Activated B cell treated with CpG ODN at 0.5 μM for 24 hours (primary cell): ENCODE measurements at regions of chr4 and their contacts with region 1.

Region 1: DNA sequence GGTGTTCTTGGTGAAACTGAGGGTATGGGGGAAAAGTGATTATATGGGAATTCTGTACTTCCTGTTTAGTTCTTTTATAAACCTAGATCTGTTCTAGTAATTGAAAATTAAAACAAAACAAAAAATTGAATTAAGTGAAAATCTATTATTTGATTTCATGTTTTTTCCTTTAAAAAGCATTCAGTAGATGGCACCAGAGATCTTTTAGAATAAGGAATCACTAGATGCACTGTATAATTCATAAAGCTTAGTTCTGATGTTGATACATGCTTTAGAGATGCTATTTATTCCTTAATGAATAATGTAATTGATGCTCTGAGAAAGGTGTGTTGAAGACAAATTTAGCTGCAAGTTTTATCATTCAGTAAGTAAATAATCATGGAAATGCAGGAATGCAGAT is 87.3 kb downstream of the LCORL start:
- DNase-seq: no peak
- ATAC-seq: no peak
- H3K4me3 Mint-ChIP-seq: no peak overlapping the region
- H3K27ac Mint-ChIP-seq: no peak overlapping the region
- H3K4me1 Mint-ChIP-seq: no peaks in the 10 kb centered on the region
- H3K27me3 Mint-ChIP-seq: no peaks in the 10 kb centered on the region
- CTCF ChIP-seq: no peak

Region 2: GRCh38 chr4:18075823-18076433 is 141.6 kb after region 1 on chr4:
- CTCF ChIA-PET with region 1: no interaction called
- POLR2A ChIA-PET with region 1: interaction called, 11 read pairs
- intact Hi-C with region 1: no loop called
- DNase-seq: no peak
- ATAC-seq: peak; percentile 56
- H3K4me3 Mint-ChIP-seq: no peak overlapping the region
- H3K27ac Mint-ChIP-seq: no peak overlapping the region
- H3K4me1 Mint-ChIP-seq: peaks cover 3% of the 10 kb centered on the region
- H3K27me3 Mint-ChIP-seq: peaks cover 26% of the 10 kb centered on the region
- CTCF ChIP-seq: no peak

Region 3: DNA sequence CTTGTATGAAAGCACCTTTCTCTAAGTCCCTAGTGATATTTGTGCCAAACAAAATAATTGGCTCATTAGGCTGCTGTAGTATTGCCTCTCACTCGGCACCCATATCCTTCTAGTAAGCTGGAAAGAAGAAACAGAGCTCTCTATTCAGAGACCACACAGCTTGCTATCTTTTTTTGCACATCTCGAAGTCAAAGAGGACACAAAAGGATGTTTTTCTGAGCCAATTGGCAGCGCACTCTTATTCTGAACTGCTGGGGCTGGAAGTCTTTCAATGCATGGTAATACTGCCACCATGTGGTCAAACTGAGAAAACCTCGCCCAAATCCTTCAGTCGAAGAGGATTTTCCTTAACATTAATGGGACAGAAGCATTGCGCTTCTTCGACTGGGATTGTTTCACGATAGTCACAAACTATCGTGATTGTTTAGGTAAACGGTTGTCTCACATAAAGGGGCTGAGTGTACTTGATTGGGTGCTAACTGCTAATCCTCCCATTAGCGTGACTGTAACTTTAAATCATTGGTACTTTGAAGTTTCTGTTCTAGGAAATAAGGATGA is 659.2 kb after region 1 on chr4:
- CTCF ChIA-PET with region 1: no interaction called
- POLR2A ChIA-PET with region 1: no interaction called
- intact Hi-C with region 1: loop called (anchors 1 kb)
- DNase-seq: no peak
- ATAC-seq: no peak
- H3K4me3 Mint-ChIP-seq: no peak overlapping the region
- H3K27ac Mint-ChIP-seq: no peak overlapping the region
- H3K4me1 Mint-ChIP-seq: peaks cover 3% of the 10 kb centered on the region
- H3K27me3 Mint-ChIP-seq: peaks cover 10% of the 10 kb centered on the region
- CTCF ChIP-seq: peak; percentile 51